K562 (cell line): ENCODE measurements at regions of chr6 and their contacts with region 1.

Region 1: DNA sequence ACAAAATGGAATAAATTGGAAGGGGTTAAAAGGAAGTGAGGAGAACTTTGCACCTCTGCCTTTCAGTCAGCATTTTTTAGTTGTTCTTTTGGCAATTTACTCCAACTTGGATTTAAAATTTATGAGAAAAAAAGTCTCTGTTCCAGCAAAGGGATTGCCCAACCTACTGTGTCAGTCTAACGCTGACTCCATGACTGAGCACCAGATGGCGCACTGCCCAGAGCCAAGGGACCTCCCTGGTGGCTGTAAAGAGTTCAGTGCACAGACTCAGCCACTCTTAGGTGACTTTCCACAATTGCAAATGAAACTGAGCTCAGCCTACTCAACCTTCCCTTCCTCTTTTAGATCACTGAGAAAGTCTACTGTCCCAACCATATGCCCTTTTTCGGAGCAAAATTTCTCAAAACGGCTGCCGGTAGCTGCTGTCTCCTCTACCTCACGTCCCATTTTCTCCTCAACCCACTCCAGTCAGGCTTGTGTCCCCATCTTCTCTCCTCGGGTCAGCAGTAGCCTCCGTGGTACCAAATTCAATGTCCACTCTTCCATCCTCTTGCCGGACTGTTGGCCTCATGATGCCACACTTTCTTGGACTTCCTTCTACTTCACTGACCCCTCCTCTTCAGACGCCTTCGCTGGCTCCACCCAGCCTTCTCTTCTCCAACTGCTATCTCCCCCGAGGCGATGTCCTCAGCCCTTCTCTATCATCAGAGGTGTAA is 38.7 kb downstream of the GSTA2 start:
- DNase-seq: peak; percentile 61 to 85 (median 72)
- ATAC-seq: peak; percentile 97
- H3K4me3 ChIP-seq: no peak overlapping the region
- H3K27ac ChIP-seq: no peak overlapping the region; the same call in 2 of the 3 replicates
- H3K4me1 ChIP-seq: peaks cover 14 to 28% of the 10 kb centered on the region in 2 experiments
- H3K27me3 ChIP-seq: no peaks in the 10 kb centered on the region
- CTCF ChIP-seq: peak; percentile 90 to 98 (median 92)
- EP300 ChIP-seq: no peak
- POLR2A ChIP-seq: no peak
- RAD21 ChIP-seq: peak; percentile 54 to 79

Region 2: GRCh38 chr6:52759085-52759484 is 34.5 kb after region 1 on chr6:
- CTCF ChIA-PET with region 1: no interaction called
- POLR2A ChIA-PET with region 1: no interaction called
- in situ Hi-C with region 1: no loop called
- intact Hi-C with region 1: loop called (anchors 2 kb)
- DNase-seq: no peak
- ATAC-seq: no peak
- H3K4me3 ChIP-seq: no peak overlapping the region
- H3K27ac ChIP-seq: no peak overlapping the region
- H3K4me1 ChIP-seq: no peaks in the 10 kb centered on the region; a peak in 1 of 5 replicates
- H3K27me3 ChIP-seq: no peaks in the 10 kb centered on the region; a peak in 1 of 5 replicates
- CTCF ChIP-seq: no peak
- EP300 ChIP-seq: no peak
- POLR2A ChIP-seq: no peak
- RAD21 ChIP-seq: no peak

Region 3: GRCh38 chr6:52995913-52996645 is 271.5 kb after region 1 on chr6:
- CTCF ChIA-PET with region 1: no interaction called
- POLR2A ChIA-PET with region 1: no interaction called
- in situ Hi-C with region 1: no loop called
- intact Hi-C with region 1: loop called (anchors 10 kb)
- DNase-seq: peak in 1 of 4 experiments; percentile 79
- ATAC-seq: no peak
- H3K4me3 ChIP-seq: peak overlapping the region; percentile 28; the same call in 1 of the 2 replicates
- H3K27ac ChIP-seq: no peak overlapping the region
- H3K4me1 ChIP-seq: peaks cover 0 to 10% of the 10 kb centered on the region in 2 experiments; a peak in 3 of 5 replicates
- H3K27me3 ChIP-seq: no peaks in the 10 kb centered on the region
- CTCF ChIP-seq: no peak
- EP300 ChIP-seq: no peak
- POLR2A ChIP-seq: no peak
- RAD21 ChIP-seq: no peak

Region 4: DNA sequence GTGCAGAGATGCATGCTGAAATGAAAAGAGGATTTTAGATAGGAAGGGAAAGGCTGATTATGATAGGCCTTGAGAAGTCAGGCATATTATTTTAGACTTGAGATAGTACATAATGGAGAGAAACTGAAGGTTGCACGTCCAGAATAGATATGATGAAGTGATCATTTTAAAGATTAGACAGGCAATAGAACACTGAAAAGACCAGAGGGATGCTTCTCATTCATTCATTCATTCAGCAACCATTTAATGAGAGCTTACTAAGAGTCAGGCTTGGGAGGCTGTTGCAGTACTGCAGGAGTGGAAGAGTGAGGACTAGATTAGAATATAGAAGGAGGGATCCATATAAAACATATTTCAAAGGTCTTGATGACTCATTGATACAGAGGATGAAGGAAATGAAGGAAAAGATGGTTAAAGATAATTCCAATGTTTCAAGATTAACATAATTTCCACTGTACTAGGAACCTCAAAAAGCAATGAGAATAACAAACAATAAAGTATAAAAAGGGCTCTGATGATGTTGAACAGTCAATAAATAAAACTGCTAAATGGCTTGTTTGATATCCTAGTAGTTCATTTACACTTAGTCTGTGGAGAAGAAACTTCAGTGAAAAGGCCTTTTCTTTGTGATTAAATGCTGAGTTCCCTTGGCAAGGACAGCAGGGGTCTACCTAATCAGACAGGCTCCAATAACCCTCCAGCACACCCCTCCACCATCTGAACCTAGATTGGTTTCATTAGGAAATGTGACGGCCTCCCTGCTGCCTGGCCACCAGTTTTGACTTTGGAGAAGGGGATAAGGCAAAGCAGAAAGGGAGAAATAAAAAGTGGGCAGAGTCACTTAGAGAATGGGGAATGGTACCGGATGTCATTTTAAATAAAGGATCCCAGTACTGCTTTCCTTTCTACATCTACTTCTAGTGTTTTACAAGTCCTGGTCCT is 335.4 kb after region 1 on chr6:
- CTCF ChIA-PET with region 1: no interaction called
- POLR2A ChIA-PET with region 1: no interaction called
- in situ Hi-C with region 1: loop called (anchors 10 kb)
- intact Hi-C with region 1: no loop called
- DNase-seq: no peak
- ATAC-seq: no peak
- H3K4me3 ChIP-seq: peak overlapping the region; percentile 78
- H3K27ac ChIP-seq: no peak overlapping the region
- H3K4me1 ChIP-seq: peaks cover 15 to 29% of the 10 kb centered on the region in 2 experiments; a peak in 4 of 5 replicates
- H3K27me3 ChIP-seq: no peaks in the 10 kb centered on the region
- CTCF ChIP-seq: no peak
- EP300 ChIP-seq: no peak
- POLR2A ChIP-seq: no peak
- RAD21 ChIP-seq: no peak